A549 (cell line): ENCODE measurements at regions of chr17 and their contacts with region 1.

Region 1: GRCh38 chr17:18319604-18320256 is 4.6 kb downstream of the SMCR8 start:
- DNase-seq: peak; percentile 37 to 63
- ATAC-seq: peak; percentile 42 to 48
- H3K4me3 ChIP-seq: no peak overlapping the region
- H3K27ac ChIP-seq: no peak overlapping the region
- H3K4me1 ChIP-seq: peaks cover 28% of the 10 kb centered on the region; the same call in 2 of the 3 replicates
- CTCF ChIP-seq: peak; percentile 41; the same call in 2 of the 3 replicates
- EP300 ChIP-seq: no peak
- POLR2A ChIP-seq: no peak
- RAD21 ChIP-seq: peak; percentile 63 to 66

Region 2: GRCh38 chr17:18241229-18241871 is 78.4 kb before region 1 on chr17:
- CTCF ChIA-PET with region 1: no interaction called
- POLR2A ChIA-PET with region 1: no interaction called
- DNase-seq: no peak
- ATAC-seq: peak; percentile 17 to 18; a peak in 3 of 6 replicates
- H3K4me3 ChIP-seq: no peak overlapping the region
- H3K27ac ChIP-seq: no peak overlapping the region
- H3K4me1 ChIP-seq: no peaks in the 10 kb centered on the region
- CTCF ChIP-seq: no peak
- EP300 ChIP-seq: no peak
- POLR2A ChIP-seq: no peak
- RAD21 ChIP-seq: no peak

Region 3: DNA sequence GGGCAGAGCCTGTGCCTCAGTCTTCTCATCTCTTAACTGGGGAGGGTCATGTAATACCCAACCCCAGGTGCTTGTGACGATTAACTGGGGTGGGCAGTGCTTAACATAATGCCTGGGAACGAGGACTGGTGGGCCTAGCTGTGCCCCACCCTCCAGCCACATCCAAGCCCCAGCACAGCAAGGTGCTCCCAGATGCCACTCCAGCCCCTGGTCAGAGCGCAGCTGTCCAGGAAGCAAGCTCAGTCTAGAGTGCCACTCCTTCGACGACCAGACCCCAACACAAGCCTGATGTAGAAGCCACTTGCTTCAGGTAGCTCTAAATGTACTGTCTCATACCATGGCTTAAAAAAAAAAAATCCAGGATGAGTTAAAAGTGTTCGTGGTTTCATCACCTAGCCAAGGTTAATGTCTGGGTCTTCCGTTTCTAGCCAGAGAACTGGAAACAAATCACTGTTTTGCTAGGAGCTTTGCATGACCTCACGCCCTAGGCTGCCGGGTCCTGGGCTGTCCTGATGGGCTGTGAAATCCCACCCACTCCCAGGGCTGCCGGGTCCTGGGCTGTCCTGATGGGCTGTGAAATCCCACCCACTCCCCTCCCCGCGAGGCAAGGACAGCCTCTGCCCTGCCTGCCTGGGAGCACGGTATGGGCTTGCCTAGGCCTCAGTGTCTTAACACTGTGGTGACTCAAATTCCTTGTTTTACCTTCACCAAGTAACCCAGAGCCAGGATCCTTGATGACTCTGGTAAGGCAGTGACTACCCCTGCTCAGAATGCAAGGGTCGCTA is 51.6 kb before region 1 on chr17:
- CTCF ChIA-PET with region 1: no interaction called
- POLR2A ChIA-PET with region 1: no interaction called
- DNase-seq: no peak
- ATAC-seq: peak; percentile 3 to 31; a peak in 3 of 6 replicates
- H3K4me3 ChIP-seq: no peak overlapping the region
- H3K27ac ChIP-seq: no peak overlapping the region
- H3K4me1 ChIP-seq: no peaks in the 10 kb centered on the region
- CTCF ChIP-seq: no peak
- EP300 ChIP-seq: no peak
- POLR2A ChIP-seq: no peak
- RAD21 ChIP-seq: no peak

Region 4: DNA sequence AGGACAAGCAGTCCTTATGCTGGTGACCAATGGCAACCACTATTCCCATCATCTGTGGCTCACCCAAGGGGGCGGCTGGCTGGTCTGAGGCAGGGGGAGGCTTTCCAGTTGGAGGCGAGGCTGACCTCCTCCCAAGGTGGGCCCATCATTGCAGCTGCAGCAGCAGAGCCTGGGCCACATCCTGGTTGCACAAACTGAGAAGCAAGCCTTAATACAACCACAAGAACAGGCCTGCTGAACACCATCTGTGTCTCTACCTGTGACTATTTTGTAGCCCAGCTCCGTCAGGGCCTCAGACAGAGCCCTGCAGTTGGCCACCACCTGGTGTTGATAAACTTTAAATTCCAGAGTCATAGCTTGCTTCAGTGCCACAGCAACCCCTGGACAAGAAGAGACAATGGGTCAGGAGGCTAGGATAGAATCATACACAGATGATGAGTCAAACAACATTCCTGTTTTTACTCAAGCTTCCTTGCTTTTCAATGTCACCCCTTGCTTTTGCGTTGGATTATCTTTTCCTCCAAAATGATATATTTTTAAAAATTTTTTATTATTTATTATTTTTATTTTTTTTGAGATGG is 13.3 kb after region 1 on chr17:
- CTCF ChIA-PET with region 1: interaction called, 15 read pairs
- POLR2A ChIA-PET with region 1: no interaction called
- DNase-seq: no peak
- ATAC-seq: no peak
- H3K4me3 ChIP-seq: no peak overlapping the region
- H3K27ac ChIP-seq: no peak overlapping the region
- H3K4me1 ChIP-seq: no peaks in the 10 kb centered on the region
- CTCF ChIP-seq: no peak
- EP300 ChIP-seq: no peak
- POLR2A ChIP-seq: no peak
- RAD21 ChIP-seq: no peak

Region 5: DNA sequence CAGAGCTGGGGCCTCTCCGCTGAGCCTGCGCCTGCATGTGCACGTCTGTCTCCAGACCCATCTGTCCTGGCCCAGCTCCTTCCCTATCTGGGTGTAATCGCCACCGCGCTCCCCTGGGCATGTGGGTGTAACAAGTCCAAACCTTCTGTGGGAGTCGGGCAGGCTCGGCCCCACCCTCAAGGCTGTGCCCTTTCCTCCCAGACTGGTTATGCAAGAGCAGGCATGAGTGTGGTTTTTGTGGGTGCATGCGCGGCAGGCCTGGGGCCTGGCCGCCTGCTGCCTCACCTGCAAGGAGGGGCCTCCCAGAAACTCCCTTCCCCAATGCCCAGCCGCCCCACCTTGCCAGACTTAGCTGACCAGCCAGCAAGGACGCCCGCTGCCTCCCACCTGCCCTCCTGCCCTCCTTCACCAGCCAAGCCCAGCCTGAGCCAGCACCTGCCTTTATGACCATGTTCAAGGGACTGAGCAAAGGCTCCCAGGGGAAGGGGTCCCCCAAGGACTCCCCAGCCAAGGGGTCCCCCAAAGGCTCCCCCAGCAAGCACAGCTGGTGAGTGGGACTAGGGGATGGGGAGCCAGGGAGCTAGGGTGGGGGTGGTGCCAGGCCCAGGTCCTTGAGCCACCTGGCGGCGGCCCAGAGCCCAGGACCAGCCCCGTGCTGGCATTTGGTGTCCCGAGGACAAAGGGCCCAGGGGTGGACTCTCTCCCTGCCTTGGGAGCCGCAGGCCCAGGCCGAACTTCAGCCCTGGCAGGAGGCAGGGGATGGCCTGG is 57.9 kb after region 1 on chr17 and contains the start of gene EVPLL:
- CTCF ChIA-PET with region 1: interaction called, 16 read pairs
- POLR2A ChIA-PET with region 1: no interaction called
- DNase-seq: peak; percentile 43 to 51
- ATAC-seq: peak; percentile 83 to 94
- H3K4me3 ChIP-seq: no peak within 1 kb of the TSS
- H3K27ac ChIP-seq: peak within 1 kb of the TSS; percentile 30 to 84; a peak in 5 of 6 replicates
- H3K4me1 ChIP-seq: peaks cover 11% of the 10 kb centered on the region
- CTCF ChIP-seq: peak; percentile 54
- EP300 ChIP-seq: no peak
- POLR2A ChIP-seq: no peak
- RAD21 ChIP-seq: peak; percentile 33 to 46; a peak in 3 of 5 replicates
- polyA plus RNA-seq, gene EVPLL: not detected in 2 replicates